Mucosa of descending colon (tissue), 3 donors: ENCODE measurements at regions of chr12 and their contacts with region 1.

Region 1: DNA sequence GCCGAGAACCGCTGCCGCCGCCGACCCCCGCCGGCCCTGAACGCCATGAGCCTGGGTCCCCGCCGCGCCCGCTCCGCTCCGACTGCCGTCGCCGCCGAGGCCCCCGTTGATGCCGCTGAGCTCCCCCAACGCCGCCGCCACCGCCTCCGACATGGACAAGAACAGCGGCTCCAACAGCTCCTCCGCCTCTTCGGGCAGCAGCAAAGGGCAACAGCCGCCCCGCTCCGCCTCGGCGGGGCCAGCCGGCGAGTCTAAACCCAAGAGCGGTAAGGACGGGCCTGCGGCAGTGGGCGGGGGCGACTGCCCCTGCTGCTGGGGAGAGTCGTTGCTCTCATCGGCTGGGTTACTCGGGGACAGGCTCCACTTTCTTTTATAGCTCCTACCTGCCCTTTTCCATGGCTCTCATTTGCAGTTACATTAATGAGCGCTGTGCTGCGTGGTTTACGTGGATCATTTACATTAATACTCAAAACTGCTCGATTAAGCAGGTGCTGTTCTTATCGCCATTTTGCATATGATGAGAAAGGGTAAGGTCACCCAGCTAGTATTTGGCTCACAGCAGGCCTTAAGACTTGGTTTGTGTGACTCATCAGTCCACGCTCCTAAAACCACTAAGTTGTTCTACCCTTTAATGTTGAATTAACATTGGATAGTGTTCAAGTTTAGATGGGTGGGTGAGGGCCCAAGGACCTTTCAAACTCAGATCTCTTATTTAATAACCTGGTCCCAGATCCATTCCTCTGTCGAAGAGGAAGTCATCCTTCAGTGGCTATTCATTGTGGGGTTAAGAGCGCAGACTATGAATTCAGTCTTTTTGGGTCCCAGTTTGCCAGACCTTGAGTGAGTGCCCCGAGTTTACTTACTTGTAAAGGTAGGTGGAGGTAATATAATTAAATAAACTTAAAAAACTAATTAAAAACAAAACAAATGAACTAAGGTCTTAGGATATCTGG is 823 bp downstream of the RNF10 start:
- DNase-seq: peak; percentile 58 to 75 (median 74)
- ATAC-seq: peak; percentile 59
- H3K4me3 ChIP-seq: peak overlapping the region; percentile 99
- H3K4me1 ChIP-seq: peaks cover 41% of the 10 kb centered on the region
- CTCF ChIP-seq: no peak

Region 2: DNA sequence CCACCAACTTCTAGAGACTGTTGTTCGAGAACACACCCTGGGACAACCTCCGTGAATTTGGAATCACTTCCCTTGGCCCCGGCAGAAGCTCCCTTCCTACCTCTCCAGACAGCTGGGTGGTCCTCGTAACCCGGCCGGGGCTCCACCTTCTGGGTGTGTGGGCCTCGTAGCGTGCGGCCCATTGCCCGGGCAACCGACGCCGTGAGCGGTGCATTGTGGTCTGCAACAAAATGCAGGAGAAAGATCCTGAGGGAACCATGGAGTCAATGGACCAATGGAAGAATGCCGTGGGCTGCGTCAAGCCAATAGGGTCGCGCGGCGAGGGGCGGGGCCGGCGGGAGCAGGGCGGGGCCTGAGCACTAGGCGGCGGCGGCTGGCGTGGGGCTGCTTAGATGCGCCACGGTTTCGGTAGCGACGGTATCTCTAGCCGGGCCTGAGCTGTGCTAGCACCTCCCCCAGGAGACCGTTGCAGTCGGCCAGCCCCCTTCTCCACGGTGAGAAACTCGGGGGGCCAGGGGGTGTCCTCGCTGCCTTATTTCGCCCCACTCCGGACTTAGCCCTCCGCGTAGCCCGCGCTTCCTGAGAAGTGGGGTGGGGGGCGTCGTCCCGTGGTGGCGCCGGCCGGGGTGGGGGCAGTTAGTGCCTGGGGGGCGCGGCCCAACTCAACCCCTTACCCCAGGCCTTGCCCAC is 39.1 kb before region 1 on chr12 and contains the start of gene DYNLL1:
- intact Hi-C with region 1: loop called in 1 of 2 experiments (anchors 5 kb)
- DNase-seq: peak; percentile 96 to 99 (median 98)
- ATAC-seq: peak; percentile 99
- H3K4me3 ChIP-seq: peak within 1 kb of the TSS; percentile 92
- H3K4me1 ChIP-seq: peaks cover 14% of the 10 kb centered on the region
- CTCF ChIP-seq: no peak
- total RNA-seq, gene DYNLL1: 309 to 343 (median 309) TPM